ENCODE measurements at regions of chr22 and their contacts with region 1.

Region 1: DNA sequence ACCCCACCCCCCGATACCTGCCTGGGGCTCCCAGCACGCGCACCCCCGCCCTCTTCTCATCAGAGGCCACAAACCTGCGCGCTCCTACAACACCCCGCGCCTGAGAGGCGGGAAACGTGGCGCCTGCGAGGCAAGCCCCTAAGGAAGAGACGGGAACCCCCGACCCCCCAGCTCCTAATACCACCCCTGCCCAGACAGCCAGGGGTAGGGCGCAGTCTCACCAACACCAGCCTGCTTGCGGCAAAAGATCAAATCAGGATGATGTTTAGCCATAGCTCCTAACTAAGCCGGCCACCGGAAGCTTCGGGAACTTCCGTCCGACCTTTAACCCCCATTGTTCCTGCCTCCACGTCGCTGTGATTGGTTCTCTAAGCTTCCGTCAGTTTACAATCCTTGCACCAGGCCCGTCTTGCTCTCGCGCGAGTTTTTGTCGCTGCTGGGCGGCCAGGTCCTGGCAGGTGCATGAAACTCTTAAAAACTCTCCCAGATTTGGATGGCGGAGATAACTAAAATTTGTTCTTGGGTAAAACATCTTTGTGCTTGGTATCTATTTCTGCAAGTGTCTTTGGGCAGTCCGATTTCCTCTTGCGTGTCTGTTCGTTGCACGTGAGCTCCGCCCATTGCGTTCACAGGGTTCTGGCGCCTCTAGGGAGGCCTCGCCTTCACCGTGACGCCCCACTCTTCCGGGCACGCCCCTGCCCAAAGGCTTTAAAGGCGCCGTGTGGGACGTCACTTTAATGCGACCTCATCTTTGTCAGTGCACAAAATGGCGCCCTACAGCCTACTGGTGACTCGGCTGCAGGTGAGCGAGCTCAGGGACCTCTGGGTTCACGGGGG is at the starts of genes ACO2 and PHF5A:
- DNase-seq: peak; percentile 98
- ATAC-seq: peak; percentile 96
- total RNA-seq, gene ACO2: 810 TPM
- total RNA-seq, gene PHF5A: 25.5 TPM

Region 2: DNA sequence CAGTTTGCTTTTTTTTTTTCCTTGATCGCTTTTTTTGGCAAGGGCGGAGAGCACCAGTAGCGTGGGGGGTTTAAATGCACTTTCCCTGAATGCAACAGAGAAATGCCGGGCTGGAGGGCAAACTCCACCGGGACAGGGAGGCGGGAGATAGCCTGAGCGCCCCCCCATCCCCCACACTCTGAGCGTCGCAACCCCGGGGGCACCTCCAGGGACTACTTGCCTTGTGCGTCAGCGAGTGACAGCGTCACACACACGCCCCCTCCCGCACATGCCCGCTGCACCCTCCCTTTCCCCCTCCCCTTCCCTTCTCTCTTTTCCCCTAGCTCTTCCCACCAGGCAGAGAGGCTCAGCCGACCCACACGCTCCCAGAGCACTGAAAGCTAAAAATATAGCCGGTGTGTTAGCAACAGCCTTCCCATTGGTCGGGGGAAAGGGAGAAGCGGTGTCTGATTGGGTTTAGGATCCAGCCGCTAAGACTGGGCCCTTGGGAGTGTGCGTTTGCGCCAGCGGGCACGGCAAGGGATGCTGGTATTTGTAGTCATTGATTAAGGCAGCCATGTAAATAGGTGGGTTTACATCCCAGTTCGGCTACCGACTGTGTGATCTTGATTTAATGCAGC is 20.3 kb before region 1 on chr22:
- intact Hi-C with region 1: loop called (anchors 2 kb)
- DNase-seq: peak; percentile 95
- ATAC-seq: peak; percentile 84

Measured in Right ventricle myocardium inferior (tissue), 1 donor.